ENCODE measurements at regions of chr20 and their contacts with region 1.

Region 1: DNA sequence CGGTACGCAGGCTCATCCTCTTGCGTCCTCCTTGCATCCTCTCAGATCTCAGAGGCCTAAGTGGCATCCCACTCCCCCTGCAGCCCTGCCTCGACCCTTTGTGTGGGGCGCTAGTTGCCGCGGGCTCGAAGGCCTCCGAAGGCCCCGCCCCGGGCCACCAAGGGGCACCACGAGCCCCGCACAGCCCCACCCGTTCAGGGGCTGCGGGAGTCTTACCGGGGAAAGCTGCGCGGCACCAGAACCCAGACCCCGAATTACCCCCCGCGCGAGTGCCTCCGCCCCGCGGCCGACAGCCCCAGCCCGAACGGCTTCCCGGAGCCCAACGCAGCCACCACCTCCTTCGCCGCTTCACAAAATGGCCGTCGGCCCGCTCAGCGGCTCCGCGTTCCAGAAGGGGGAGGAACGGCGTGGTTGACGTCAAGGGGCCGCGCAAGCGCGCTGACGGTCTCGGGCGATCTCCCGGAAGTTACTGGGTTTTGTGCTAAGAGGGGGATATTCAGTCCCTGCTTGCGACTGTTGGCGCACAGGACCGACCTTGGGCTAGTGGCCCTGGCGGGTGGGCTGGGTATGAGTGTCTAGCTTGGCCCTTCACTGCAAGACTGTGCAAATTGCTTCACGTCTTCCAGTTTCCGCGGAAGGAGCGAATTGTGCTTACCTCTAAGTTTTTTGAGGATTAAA is at the starts of genes CPNE1 and RBM12:
- DNase-seq: peak; percentile 87
- ATAC-seq: peak; percentile 97
- H3K4me3 ChIP-seq: peak within 1 kb of the TSS; percentile 93 to 99
- H3K27ac ChIP-seq: peak within 1 kb of the TSS; percentile 97
- H3K4me1 ChIP-seq: peaks cover 23% of the 10 kb centered on the region
- H3K27me3 ChIP-seq: no peaks in the 10 kb centered on the region
- CTCF ChIP-seq: no peak
- total RNA-seq, gene CPNE1: 217 TPM
- total RNA-seq, gene RBM12: 100 TPM

Region 2: DNA sequence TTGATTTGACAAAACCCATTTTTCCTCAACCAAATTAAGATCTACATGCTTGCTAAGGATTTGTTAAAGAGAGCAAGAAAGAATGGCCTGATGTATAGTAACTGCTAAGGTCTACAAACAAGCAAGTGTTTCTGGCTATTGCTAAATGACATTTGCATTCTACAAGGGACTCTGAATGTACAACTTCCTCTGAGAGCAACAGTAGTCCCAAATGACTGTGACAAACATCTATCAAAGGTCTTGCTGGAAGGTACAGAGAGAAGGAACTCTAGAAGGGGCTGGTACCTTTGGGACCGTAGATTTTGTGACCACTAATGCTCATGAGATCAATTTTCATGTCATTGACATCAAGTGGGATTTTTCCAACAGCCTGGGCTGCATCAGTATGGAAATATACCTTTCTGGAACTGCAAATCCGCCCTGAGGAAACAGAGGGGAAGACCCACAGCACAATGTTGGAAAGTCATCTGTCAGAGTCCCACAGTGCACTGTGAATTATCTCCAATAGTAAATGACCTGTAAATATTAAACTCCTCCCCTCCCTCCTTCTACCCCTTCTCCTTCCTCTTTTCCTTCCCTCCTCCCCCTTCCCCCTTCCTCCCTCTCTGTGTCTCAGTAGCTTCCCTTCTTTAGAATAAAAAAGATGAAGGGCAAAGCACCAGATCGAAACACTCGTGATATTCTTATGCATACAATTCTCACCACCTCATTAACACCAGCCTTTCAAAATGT is 15.9 kb after region 1 on chr20:
- CTCF ChIA-PET with region 1: no interaction called
- POLR2A ChIA-PET with region 1: interaction called, 18 read pairs
- in situ Hi-C with region 1: no loop called
- intact Hi-C with region 1: no loop called
- DNase-seq: no peak
- ATAC-seq: no peak
- H3K4me3 ChIP-seq: no peak overlapping the region
- H3K27ac ChIP-seq: no peak overlapping the region
- H3K4me1 ChIP-seq: no peaks in the 10 kb centered on the region
- H3K27me3 ChIP-seq: no peaks in the 10 kb centered on the region
- CTCF ChIP-seq: no peak

Region 3: DNA sequence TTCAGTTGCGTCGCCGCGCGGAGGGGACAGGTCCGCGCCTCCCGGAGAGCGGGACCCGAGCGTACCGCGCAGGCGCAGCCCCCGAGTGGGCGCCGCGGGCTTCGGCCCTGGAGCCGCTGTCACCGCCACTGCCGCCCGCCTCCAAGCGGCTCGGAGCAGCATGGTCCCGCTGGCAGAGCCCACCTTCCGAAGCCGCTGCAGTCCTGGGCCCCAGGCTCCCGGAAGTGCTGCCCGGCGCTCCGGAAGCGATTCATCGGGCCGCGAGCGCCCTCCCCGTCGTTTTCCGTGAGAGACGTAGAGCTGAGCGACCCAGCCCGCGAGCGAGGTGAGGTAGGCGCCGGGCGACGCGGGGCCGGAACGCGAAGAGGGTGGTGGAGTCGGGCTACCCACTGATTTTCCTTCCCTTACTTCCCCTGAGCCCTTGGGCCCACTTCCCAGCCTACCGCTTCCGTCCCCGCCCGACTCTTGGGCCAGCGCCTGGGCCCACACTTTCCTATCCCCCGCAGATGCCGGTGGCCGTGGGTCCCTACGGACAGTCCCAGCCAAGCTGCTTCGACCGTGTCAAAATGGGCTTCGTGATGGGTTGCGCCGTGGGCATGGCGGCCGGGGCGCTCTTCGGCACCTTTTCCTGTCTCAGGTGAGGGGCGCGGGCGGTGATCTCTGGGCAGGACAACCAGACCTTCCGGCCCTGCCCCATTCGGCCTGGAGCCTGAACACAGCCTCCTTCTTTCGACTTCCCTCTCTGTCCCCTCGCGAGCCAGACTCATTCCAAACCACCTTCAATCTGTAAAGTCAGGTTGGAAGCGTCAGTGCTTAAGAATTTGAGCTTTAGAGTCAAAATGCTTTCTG is 34.7 kb after region 1 on chr20 and contains the starts of genes NFS1 and ROMO1:
- CTCF ChIA-PET with region 1: no interaction called
- POLR2A ChIA-PET with region 1: interaction called, 11 read pairs
- in situ Hi-C with region 1: no loop called
- intact Hi-C with region 1: no loop called
- DNase-seq: no peak
- ATAC-seq: peak; percentile 92
- H3K4me3 ChIP-seq: peak within 1 kb of the TSS; percentile 80 to 86
- H3K27ac ChIP-seq: peak within 1 kb of the TSS; percentile 93
- H3K4me1 ChIP-seq: peaks cover 21% of the 10 kb centered on the region
- H3K27me3 ChIP-seq: no peaks in the 10 kb centered on the region
- CTCF ChIP-seq: no peak; the same call in 1 of the 2 replicates
- total RNA-seq, gene NFS1: 44.9 TPM
- total RNA-seq, gene ROMO1: 319 TPM

Measured in Panc1 (cell line).